Mammary epithelial cell (primary cell): ENCODE measurements at regions of chr10 and their contacts with region 1.

Region 1: DNA sequence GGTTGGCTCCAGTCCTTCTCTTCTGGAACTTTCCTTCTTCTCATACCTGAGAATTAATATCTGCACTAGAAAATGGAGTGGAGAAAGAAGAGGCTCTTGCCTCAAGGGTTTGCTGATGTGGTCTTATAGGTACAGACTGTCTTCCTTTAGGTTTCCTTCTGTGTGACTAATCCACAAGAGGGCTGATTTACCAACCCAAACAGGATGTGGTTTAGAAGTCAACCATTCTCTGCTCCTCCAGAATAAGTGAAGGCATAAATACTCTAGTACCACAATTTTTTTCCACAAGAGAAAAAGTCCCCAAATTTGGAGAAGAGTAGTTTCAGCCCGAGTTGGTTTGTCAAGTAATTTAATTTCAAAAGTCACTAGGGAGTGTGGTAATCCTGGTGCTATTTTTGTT is 85.8 kb downstream of the NRP1 start:
- DNase-seq: peak; percentile 93
- H3K4me3 ChIP-seq: no peak overlapping the region
- H3K27ac ChIP-seq: peak overlapping the region; percentile 78
- H3K4me1 ChIP-seq: peaks cover 56% of the 10 kb centered on the region
- H3K27me3 ChIP-seq: no peaks in the 10 kb centered on the region
- CTCF ChIP-seq: no peak

Region 2: GRCh38 chr10:32995751-32996150 is 252.9 kb before region 1 on chr10:
- CTCF ChIA-PET with region 1: no interaction called
- dilution Hi-C with region 1: no loop called
- in situ Hi-C with region 1: no loop called
- intact Hi-C with region 1: no loop called
- DNase-seq: no peak
- H3K4me3 ChIP-seq: no peak overlapping the region
- H3K27ac ChIP-seq: no peak overlapping the region
- H3K4me1 ChIP-seq: peaks cover 21% of the 10 kb centered on the region
- H3K27me3 ChIP-seq: no peaks in the 10 kb centered on the region
- CTCF ChIP-seq: no peak

Region 3: GRCh38 chr10:33193057-33193700 is 55.5 kb before region 1 on chr10:
- CTCF ChIA-PET with region 1: no interaction called
- dilution Hi-C with region 1: loop called (anchors 10 kb)
- in situ Hi-C with region 1: no loop called
- intact Hi-C with region 1: no loop called
- DNase-seq: peak; percentile 66
- H3K4me3 ChIP-seq: no peak overlapping the region
- H3K27ac ChIP-seq: no peak overlapping the region
- H3K4me1 ChIP-seq: peaks cover 13% of the 10 kb centered on the region
- H3K27me3 ChIP-seq: no peaks in the 10 kb centered on the region
- CTCF ChIP-seq: peak; percentile 69 to 73

Region 4: DNA sequence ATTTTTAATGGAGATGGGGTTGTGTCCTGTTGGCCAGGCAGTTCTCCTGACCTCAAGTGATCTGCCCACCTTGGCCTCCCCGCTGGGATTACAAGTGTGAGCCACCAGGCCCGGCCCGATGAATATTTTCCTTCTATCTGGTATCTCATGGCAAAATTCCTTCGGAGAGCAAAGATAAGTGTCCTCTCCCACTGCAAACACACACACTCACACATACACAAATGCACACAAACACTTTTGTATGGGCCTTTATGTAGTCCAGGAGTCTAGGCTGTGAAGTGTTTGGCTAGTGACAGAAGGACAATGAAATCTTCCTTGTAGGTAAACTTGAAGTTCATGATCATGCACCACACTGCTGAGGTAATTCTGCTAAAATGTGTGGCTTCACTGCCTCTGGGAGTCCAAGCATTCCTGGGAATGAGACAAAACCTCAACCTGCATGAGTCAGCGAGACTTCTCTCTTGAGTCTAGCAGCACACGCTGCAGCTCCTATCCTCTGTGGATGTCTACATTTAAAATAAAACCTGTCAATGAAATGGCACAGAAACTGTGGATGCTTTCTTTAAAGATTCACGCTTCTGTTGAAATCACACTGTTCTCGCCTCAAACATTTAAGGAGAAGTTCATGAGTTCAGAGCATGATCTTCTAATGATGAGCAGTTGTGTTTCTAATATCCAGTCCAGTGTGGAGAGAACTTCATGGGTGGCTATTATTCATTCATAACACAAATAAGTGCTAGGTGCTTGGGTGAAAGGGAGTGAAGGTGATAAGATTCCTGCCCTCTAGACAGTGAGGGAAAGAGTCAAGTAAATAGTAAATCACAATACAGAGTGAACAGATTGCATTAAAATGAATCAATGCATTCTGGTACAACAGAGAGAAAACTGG is 10.7 kb before region 1 on chr10:
- CTCF ChIA-PET with region 1: no interaction called
- dilution Hi-C with region 1: no loop called
- in situ Hi-C with region 1: no loop called
- intact Hi-C with region 1: loop called (anchors 2 kb)
- DNase-seq: peak; percentile 95
- H3K4me3 ChIP-seq: no peak overlapping the region
- H3K27ac ChIP-seq: peak overlapping the region; percentile 93
- H3K4me1 ChIP-seq: peaks cover 33% of the 10 kb centered on the region
- H3K27me3 ChIP-seq: no peaks in the 10 kb centered on the region
- CTCF ChIP-seq: no peak